Prostate gland (tissue), 2 donors: ENCODE measurements at regions of chr13 and their contacts with region 1.

Region 1: DNA sequence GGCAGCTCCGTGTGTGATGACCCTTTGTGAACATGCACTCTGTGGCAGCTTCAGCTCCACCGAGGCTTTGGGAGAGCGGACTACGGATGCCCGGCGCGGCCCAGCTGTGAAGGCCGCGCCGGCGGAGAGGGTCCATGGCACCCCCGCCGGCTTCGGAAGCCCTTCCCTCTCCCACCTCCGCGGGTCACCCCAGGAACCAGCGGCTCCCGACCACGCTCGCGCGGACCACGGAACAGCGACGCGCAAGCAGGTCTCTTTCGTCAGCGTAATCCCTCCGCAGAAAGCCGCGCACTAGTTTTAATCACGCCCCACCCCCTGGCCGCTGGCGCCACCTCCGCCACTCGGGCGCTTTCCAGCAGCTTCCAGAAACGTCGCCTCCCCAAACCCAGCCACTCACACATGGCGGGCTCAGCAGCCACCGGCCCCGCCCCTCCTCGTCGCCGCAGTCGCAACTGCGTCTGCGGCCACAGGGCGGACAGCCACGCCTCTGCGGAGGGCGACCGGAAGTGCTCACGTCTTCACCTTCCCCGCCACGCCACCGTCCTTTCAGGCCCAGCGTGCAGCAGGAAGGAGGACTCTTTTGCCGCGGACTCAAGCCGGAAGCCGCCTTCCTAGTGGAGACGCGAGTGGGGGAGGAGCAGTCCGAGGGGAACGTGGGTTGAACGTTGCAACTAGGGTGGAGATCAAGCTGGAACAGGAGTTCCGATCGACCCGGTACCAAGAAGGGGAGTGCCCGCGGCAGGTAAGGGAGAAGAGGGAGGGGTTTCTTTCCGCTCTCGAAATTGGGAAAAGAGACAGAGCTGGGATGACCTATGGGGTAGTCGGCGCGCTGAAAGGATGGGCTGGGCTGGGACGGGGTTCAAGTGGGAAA is at the start of gene USPL1:
- DNase-seq: peak; percentile 97
- H3K4me3 ChIP-seq: peak within 1 kb of the TSS; percentile 61 to 68
- H3K27ac ChIP-seq: peak within 1 kb of the TSS; percentile 100
- H3K4me1 ChIP-seq: no peaks in the 10 kb centered on the region
- H3K27me3 ChIP-seq: no peaks in the 10 kb centered on the region
- CTCF ChIP-seq: peak in 3 of 4 experiments; percentile 26 to 91 (median 74)
- POLR2A ChIP-seq: peak; percentile 96
- total RNA-seq, gene USPL1: 20.1 to 24.4 TPM

Region 2: GRCh38 chr13:30132623-30133553 is 484.7 kb before region 1 on chr13:
- intact Hi-C with region 1: loop called (anchors 5 kb)
- DNase-seq: peak; percentile 97
- H3K4me3 ChIP-seq: no peak overlapping the region
- H3K27ac ChIP-seq: peak overlapping the region in 1 of 2 donors; percentile 30
- H3K4me1 ChIP-seq: no peaks in the 10 kb centered on the region
- H3K27me3 ChIP-seq: no peaks in the 10 kb centered on the region
- CTCF ChIP-seq: peak; percentile 81 to 96 (median 95)
- POLR2A ChIP-seq: no peak

Region 3: GRCh38 chr13:30306762-30307193 is 310.8 kb before region 1 on chr13:
- intact Hi-C with region 1: loop called (anchors 5 kb)
- DNase-seq: peak; percentile 93
- H3K4me3 ChIP-seq: peak overlapping the region; percentile 95 to 98
- H3K27ac ChIP-seq: peak overlapping the region; percentile 89
- H3K4me1 ChIP-seq: no peaks in the 10 kb centered on the region
- H3K27me3 ChIP-seq: no peaks in the 10 kb centered on the region
- CTCF ChIP-seq: no peak
- POLR2A ChIP-seq: no peak

Region 4: GRCh38 chr13:30355384-30355699 is 262.2 kb before region 1 on chr13:
- intact Hi-C with region 1: no loop called
- DNase-seq: no peak
- H3K4me3 ChIP-seq: no peak overlapping the region
- H3K27ac ChIP-seq: no peak overlapping the region
- H3K4me1 ChIP-seq: no peaks in the 10 kb centered on the region
- H3K27me3 ChIP-seq: no peaks in the 10 kb centered on the region
- CTCF ChIP-seq: peak in 3 of 4 experiments; percentile 19 to 41 (median 37)
- POLR2A ChIP-seq: no peak

Region 5: DNA sequence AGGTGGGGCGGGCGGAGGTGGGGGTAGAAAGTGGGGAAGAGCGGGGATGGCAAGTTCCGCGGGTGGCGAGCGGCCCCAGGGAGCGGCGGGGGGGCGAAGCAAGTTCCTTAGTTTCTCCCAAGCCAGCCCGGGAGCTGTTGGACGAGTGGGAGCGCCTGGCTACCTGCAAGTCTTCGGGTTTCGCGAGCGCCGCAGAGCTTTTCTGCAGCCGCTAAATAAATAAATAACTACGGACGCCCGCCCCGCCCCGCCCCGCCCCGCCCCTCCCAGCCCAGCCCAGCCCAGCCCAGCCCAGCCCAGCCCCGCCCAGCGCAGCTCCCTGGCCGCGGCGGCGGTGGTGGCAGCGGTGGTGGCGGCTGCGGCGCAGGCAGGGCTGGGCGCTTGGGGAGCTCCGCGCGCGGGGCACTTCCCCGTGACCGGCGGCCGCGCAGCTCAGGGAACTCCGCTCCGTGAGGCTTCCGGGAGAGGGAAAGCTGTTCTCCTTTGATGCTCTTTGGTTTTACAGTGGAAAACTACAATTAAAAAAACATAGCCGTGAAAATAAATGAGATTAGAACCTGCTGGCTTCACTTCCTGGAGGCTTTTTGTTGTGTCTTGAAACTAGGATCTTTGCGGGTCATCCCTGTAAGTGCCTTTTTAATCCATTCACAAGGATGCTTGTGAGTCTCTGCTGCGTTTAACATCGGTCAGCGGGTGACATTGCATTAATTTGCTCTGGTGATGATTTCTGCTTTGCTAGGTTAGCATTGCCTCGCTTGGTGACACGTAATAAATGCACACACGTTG is 195.3 kb before region 1 on chr13 and contains the start of gene UBE2L5:
- intact Hi-C with region 1: loop called (anchors 5 kb)
- DNase-seq: peak; percentile 82
- H3K4me3 ChIP-seq: peak within 1 kb of the TSS; percentile 41 to 54
- H3K27ac ChIP-seq: peak within 1 kb of the TSS; percentile 96 to 98
- H3K4me1 ChIP-seq: no peaks in the 10 kb centered on the region
- H3K27me3 ChIP-seq: no peaks in the 10 kb centered on the region
- CTCF ChIP-seq: no peak
- POLR2A ChIP-seq: peak; percentile 79
- total RNA-seq, gene UBE2L5: 0.18 to 5.2 TPM

Region 6: DNA sequence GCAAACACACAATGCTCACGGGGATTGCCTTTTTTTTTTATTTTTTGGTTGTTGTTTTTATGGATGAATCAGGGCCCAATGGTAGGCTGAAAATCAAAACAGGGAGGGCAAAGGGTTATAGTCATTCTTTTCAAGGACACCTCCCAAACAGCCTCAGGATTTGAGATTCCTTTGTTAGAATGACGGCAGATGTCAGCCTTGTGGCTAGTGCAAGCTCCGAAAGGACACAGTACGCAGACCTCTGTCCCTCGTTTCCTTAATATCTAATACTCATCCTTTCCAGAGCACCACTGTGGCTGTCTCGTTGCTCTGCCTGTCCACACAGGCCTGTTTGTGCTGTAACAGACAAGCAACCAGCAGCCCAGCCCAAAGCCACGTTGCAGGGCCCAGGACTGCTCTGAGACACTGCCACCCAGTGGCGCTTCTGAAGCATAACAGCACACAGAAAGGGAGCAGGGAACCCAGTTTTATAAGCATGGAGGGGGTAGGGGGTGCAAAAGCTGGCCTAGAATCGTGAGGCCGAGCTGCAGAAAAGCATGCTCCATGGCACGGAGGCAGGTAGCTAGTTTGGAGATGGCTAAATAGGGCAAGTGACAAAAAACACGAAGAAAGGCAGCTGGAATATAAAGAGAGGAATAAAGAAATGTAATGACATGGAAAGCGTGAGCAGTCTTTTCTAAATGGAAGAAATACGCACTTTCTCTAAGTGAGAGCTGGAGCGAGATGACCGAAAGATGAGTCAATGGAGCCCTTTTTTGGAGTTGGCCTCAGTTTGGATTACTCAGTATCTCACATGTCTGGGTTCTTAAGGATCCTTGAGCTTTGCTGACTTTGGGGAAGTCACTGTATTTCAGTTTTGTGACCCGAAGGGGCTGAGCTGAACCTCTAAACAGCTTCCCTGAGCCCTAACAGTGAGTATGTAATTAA is 247.8 kb after region 1 on chr13:
- intact Hi-C with region 1: loop called (anchors 5 kb)
- DNase-seq: peak; percentile 81
- H3K4me3 ChIP-seq: no peak overlapping the region
- H3K27ac ChIP-seq: peak overlapping the region; percentile 66 to 75
- H3K4me1 ChIP-seq: peaks cover 2% of the 10 kb centered on the region
- H3K27me3 ChIP-seq: no peaks in the 10 kb centered on the region
- CTCF ChIP-seq: peak; percentile 63 to 94 (median 79)
- POLR2A ChIP-seq: peak; percentile 9